ENCODE measurements at regions of chr11 and their contacts with region 1.

Region 1: DNA sequence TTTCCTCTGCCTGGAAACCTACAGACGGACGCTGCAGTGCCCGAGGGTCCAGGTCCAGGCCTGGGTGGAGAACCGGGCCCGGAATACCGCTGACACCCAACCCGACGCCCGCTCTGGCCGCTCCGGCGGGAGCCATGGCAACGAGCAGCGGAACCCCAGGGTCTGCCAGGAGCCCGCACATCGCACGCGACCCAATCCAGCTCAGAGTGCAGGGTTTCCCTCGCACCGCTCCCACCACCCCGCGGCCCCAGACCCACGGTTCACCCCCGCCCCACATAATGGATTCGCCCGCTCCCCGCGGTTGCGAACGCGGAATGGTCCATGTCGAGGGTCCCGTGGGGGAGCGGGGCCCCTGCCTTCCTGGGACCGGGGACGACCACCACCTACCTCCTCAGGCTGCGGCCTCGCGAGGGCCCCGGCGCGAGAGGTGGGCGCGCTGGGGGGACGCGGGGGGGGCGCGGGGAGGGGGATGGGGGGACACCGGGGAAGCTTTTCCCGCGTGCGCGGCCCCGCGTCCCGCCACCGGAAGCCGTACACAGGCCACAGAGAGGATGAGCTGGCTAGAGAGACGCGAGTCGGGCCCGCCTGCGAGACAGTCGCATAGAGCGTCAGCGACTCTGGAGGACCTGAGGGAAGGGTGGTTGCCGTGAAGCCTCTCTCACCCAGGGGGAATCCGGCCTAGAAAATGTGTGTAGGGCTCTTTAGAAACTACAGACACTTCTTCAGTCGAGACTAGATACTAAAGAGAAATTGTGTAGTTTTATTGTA is at the start of gene SSRP1:
- H3K4me3 ChIP-seq: peak within 1 kb of the TSS; percentile 55
- H3K27ac ChIP-seq: peak within 1 kb of the TSS; percentile 59; the same call in 1 of the 2 replicates
- H3K4me1 ChIP-seq: no peaks in the 10 kb centered on the region
- CTCF ChIP-seq: 0 out of 2 replicates have a peak, but pooled peaks have one; percentile 11

Region 2: DNA sequence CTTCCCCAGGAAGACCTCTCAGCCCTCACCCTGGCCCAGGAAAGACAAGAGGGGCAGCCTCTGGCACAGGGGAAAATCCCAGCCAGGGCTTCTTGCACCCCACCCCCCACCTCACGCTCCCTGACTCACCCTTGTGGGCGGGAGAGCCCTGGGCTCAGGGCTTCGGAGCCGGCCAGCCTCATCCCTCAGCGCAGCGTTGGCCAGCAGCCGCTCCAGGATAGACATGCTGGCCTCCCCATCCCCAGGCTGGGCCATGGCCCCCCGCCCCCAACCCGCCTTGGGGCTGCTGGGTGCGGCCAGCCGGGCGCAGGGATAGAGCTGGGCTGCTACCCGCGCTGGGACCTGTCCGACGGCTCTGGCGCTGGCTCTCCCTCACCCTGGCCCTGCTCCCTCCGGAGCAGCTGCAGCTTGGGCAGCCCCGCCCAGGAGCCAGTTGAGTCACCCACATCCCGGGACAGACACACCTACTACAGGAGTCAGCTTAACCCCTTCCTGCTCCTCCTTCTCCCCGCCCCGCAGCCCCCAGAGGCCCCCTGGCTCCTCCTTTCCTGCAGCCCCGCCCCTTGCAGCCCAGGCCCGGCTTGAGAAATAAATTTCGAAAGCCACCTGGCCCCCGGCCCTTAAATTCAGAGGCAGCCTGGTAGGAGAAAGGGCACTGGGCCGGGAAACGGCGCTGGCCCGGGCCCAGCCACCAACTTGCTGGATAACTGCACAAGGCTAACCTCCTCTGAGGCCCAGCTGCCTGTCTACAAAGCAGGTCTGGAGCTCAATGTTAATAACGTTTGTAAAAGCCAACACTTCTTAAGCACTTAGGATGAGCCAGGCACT is 24.2 kb before region 1 on chr11:
- CTCF ChIA-PET with region 1: interaction called, 3 read pairs
- POLR2A ChIA-PET with region 1: interaction called, 11 read pairs
- H3K4me3 ChIP-seq: peak overlapping the region; percentile 43
- H3K27ac ChIP-seq: no peak overlapping the region
- H3K4me1 ChIP-seq: no peaks in the 10 kb centered on the region
- CTCF ChIP-seq: no peak

Region 3: DNA sequence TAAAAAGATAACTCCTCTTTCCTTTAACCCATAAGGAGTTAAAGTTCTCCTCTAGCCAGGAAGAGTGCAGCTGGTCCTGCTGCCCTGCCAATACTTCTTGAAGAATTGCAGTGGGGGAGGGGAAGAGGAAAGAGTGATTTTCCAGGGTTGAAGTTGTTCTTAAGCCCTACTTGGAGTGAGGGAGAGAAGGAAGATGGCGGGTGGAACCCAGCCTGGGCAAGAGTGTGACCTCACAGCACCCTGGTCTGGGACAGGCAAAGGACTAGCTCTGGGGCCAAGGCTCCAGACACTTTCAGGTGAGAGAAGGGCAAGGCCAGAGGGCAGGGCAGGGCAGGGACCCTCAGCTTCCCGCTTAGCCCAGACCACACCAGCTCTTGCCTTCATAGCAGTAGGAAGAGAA is 17.3 kb before region 1 on chr11:
- CTCF ChIA-PET with region 1: interaction called, 3 read pairs
- POLR2A ChIA-PET with region 1: interaction called, 78 read pairs
- H3K4me3 ChIP-seq: no peak overlapping the region
- H3K27ac ChIP-seq: no peak overlapping the region
- H3K4me1 ChIP-seq: peaks cover 7% of the 10 kb centered on the region
- CTCF ChIP-seq: no peak

Region 4: DNA sequence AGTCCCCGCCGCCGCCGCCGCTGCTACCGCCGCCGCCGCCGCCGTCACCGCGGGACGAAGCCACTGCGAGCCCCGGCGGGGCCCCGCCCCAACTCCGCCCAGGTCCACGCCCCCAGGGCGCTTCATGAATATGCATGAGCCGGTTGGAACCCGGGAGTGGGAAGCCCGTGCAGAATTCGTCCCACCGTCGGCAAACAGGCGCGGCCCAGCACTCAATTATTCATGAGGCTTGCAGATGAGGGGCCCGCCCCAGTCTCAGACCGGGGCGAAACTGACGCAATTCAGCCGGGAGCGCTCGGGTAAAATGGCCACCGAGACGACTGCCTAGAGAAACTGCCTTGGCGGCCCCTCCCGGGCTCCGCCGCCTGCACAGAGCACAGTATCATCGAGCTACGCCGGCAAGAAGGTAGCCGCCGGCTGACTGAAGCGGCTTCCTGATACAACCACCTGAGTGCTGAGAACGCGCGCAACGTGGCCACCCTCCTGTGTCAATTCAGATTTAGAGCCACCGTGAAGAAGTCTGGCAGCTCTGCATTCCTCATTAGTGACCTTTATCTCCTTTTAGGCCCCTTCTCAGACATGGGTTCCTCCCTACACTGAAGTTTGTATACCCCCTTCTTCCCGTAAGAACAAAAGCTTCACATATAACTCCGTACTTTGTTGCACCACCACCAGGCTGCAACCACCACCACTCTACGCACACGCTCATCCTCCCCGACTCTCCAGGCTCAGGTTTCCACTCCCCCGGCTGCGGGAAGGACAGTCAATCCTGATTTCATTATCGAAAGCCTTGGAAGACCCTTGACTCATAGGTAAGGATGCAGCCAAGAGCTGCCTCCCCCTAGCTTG is 10.4 kb before region 1 on chr11 and contains the start of gene TNKS1BP1:
- CTCF ChIA-PET with region 1: interaction called, 4 read pairs
- POLR2A ChIA-PET with region 1: interaction called, 78 read pairs
- H3K4me3 ChIP-seq: peak within 1 kb of the TSS; percentile 68
- H3K27ac ChIP-seq: peak within 1 kb of the TSS; percentile 70
- H3K4me1 ChIP-seq: peaks cover 7% of the 10 kb centered on the region
- CTCF ChIP-seq: peak; percentile 44